ENCODE measurements at regions of chr2 and their contacts with region 1.

Region 1: DNA sequence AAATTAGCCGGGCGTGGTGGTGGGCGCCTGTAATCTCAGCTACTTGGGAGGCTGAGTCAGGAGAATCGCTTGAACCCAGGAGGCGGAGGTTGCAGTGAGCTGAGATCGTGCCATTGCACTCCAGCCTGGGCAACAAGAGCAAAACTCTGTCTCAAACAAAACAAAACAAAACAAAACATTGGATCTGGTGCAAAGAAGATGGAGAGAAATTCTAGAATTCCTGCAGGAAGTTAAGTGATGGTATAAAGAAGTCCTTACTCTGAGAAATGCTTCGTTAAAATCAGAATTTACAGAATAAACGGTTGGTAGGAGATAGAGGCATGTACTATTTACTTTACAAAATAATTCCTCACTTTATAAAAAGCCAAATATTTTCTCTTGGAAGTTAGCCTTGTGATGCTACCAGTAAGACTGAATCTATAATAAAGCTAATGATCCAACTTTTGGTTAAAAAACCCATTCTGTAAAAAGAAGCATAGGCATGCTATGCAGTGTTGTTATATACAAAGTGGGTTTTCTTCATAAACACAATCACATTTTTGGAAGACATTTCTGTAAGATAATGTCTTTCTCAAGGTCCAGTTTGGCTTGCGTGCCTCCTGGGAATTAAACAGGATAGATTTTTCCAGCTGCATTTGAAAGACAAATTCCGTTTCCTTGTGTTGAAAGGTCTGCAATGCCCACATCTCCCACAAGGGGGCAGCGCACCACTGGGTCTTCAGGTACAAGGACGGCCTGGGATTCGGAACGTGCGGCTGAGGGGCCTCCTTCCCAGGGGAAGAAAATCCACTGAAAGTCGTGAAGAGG is 35.6 kb upstream of the PNO1 start:
- DNase-seq: peak; percentile 81
- ATAC-seq: peak; percentile 34
- H3K4me3 ChIP-seq: peak overlapping the region in 1 of 5 experiments; percentile 34
- H3K4me3 Mint-ChIP-seq: peak overlapping the region; percentile 50
- H3K27ac ChIP-seq: peak overlapping the region in 1 of 2 donors; percentile 88
- H3K27ac Mint-ChIP-seq: peak overlapping the region; percentile 99
- H3K4me1 ChIP-seq: peaks cover 27 to 46% of the 10 kb centered on the region in 2 donors
- H3K4me1 Mint-ChIP-seq: peaks cover 42% of the 10 kb centered on the region
- H3K27me3 ChIP-seq: no peaks in the 10 kb centered on the region
- H3K27me3 Mint-ChIP-seq: no peaks in the 10 kb centered on the region
- CTCF ChIP-seq: peak; percentile 95

Region 2: GRCh38 chr2:68062680-68063387 is 59.2 kb before region 1 on chr2 and contains the start of gene C1D:
- CTCF ChIA-PET with region 1: interaction called, 16 read pairs
- POLR2A ChIA-PET with region 1: interaction called, 4 read pairs
- intact Hi-C with region 1: loop called (anchors 1 kb)
- DNase-seq: peak; percentile 95
- ATAC-seq: peak; percentile 96
- H3K4me3 ChIP-seq: peak within 1 kb of the TSS; percentile 87 to 97 (median 96)
- H3K4me3 Mint-ChIP-seq: peak within 1 kb of the TSS; percentile 95
- H3K27ac ChIP-seq: peak within 1 kb of the TSS; percentile 88 to 96
- H3K27ac Mint-ChIP-seq: peak within 1 kb of the TSS; percentile 96
- H3K4me1 ChIP-seq: peaks cover 20 to 30% of the 10 kb centered on the region in 2 donors
- H3K4me1 Mint-ChIP-seq: peaks cover 40% of the 10 kb centered on the region
- H3K27me3 ChIP-seq: no peaks in the 10 kb centered on the region
- H3K27me3 Mint-ChIP-seq: peaks cover 6% of the 10 kb centered on the region
- CTCF ChIP-seq: no peak
- total RNA-seq, gene C1D: 20.1 and 24.8 TPM in 2 replicates

Region 3: DNA sequence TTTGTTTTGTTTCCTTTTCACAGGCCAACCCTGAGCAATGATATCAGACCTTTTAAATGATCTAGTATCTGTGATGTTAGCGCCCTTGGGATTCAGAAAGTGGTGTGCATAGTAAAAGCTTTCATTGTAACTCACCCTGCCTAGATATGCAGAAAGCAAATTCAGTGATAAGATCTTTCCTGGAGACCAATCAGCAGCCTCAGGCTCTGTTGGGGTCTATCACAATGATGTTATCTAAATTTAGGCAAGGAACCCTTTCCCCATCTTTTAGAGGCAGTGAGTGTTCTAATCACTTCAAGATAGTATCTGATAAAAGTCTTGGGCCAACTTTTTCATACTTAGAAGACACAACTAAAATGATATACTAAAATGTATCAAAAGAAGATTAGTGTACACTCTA is 12.0 kb after region 1 on chr2:
- CTCF ChIA-PET with region 1: interaction called, 25 read pairs
- POLR2A ChIA-PET with region 1: no interaction called
- intact Hi-C with region 1: no loop called
- DNase-seq: no peak
- ATAC-seq: no peak
- H3K4me3 ChIP-seq: no peak overlapping the region
- H3K4me3 Mint-ChIP-seq: no peak overlapping the region
- H3K27ac ChIP-seq: no peak overlapping the region
- H3K27ac Mint-ChIP-seq: no peak overlapping the region
- H3K4me1 ChIP-seq: no peaks in the 10 kb centered on the region
- H3K4me1 Mint-ChIP-seq: no peaks in the 10 kb centered on the region
- H3K27me3 ChIP-seq: no peaks in the 10 kb centered on the region
- H3K27me3 Mint-ChIP-seq: no peaks in the 10 kb centered on the region
- CTCF ChIP-seq: no peak

Region 4: DNA sequence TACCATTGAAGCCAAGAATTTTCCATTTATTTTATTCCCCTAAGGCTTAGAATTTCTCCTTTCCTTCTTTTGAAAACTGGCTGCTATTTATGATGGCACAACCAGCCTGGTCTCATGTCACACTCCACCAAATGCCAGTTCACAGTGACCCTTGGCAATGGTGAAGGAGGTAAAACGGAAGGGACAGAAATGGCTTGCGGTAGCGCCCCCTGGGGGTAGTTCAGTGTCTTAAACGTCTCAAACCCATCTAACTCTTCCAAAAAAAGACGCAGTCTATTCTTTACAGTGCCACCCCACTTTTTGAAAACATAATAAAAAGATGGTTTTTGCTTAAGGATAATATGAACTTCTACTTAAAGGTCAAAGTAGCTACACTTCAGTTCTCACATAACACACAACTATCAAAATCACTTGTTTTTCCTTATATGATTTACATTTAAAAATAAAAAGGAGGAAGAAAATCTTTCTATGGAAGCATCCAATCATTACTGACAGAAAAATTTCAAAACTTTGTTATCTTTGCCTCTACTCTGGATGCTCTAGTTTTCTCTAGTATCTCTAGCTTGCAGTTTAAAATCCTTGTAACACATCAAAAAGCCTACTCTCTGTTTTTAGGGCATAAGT is 63.6 kb after region 1 on chr2:
- CTCF ChIA-PET with region 1: interaction called, 36 read pairs
- POLR2A ChIA-PET with region 1: no interaction called
- intact Hi-C with region 1: loop called (anchors 1 kb)
- DNase-seq: peak; percentile 76
- ATAC-seq: peak; percentile 61
- H3K4me3 ChIP-seq: no peak overlapping the region
- H3K4me3 Mint-ChIP-seq: no peak overlapping the region
- H3K27ac ChIP-seq: no peak overlapping the region
- H3K27ac Mint-ChIP-seq: no peak overlapping the region
- H3K4me1 ChIP-seq: peaks cover 0 to 5% of the 10 kb centered on the region in 2 donors
- H3K4me1 Mint-ChIP-seq: peaks cover 24% of the 10 kb centered on the region
- H3K27me3 ChIP-seq: no peaks in the 10 kb centered on the region
- H3K27me3 Mint-ChIP-seq: no peaks in the 10 kb centered on the region
- CTCF ChIP-seq: peak; percentile 93

Region 5: GRCh38 chr2:68225119-68225632 is 103.1 kb after region 1 on chr2:
- CTCF ChIA-PET with region 1: interaction called, 20 read pairs
- POLR2A ChIA-PET with region 1: no interaction called
- intact Hi-C with region 1: no loop called
- DNase-seq: peak; percentile 45
- ATAC-seq: no peak
- H3K4me3 ChIP-seq: no peak overlapping the region
- H3K4me3 Mint-ChIP-seq: peak overlapping the region; percentile 5
- H3K27ac ChIP-seq: peak overlapping the region in 1 of 2 donors; percentile 58
- H3K27ac Mint-ChIP-seq: no peak overlapping the region
- H3K4me1 ChIP-seq: peaks cover 13 to 48% of the 10 kb centered on the region in 2 donors
- H3K4me1 Mint-ChIP-seq: peaks cover 86% of the 10 kb centered on the region
- H3K27me3 ChIP-seq: no peaks in the 10 kb centered on the region
- H3K27me3 Mint-ChIP-seq: no peaks in the 10 kb centered on the region
- CTCF ChIP-seq: no peak

Region 6: DNA sequence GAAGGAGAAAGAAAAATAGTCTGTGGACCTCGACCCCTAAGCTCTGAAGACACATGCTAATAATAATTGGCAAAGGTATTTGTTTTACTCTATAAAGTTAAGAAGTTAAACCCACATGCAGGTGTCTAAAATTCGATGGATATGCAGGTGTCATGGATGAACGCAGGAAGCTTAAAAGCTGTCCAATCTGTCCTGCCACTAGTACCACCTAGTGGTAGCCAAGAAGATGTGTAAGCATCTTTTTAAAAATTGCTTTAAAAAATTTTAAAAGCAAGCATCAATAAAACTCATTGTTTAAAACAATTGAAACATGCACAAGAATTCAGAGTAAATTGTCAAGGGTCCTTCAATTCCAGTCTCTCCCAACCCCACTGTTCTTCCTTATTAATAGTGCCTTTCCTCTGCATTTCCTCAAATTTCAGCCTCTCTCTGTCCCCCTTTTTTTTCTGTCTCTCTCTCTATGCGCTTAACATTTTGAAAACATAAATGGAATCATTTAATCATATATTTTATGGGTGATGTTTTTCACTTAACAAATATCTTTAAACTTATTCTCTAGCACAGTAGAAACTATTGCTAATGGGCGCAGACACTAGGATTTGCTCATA is 160.8 kb after region 1 on chr2:
- CTCF ChIA-PET with region 1: interaction called, 80 read pairs
- POLR2A ChIA-PET with region 1: no interaction called
- intact Hi-C with region 1: loop called (anchors 1 kb)
- DNase-seq: peak; percentile 57
- ATAC-seq: peak; percentile 53
- H3K4me3 ChIP-seq: no peak overlapping the region
- H3K4me3 Mint-ChIP-seq: no peak overlapping the region
- H3K27ac ChIP-seq: no peak overlapping the region
- H3K27ac Mint-ChIP-seq: no peak overlapping the region
- H3K4me1 ChIP-seq: peaks cover 0 to 3% of the 10 kb centered on the region in 2 donors
- H3K4me1 Mint-ChIP-seq: peaks cover 4% of the 10 kb centered on the region
- H3K27me3 ChIP-seq: no peaks in the 10 kb centered on the region
- H3K27me3 Mint-ChIP-seq: no peaks in the 10 kb centered on the region
- CTCF ChIP-seq: peak; percentile 88

Region 7: GRCh38 chr2:68441179-68441993 is 319.3 kb after region 1 on chr2:
- CTCF ChIA-PET with region 1: interaction called, 34 read pairs
- POLR2A ChIA-PET with region 1: no interaction called
- intact Hi-C with region 1: loop called (anchors 1 kb)
- DNase-seq: peak; percentile 97
- ATAC-seq: peak; percentile 98
- H3K4me3 ChIP-seq: peak overlapping the region in 1 of 5 experiments; percentile 45
- H3K4me3 Mint-ChIP-seq: peak overlapping the region; percentile 77
- H3K27ac ChIP-seq: peak overlapping the region; percentile 75 to 90
- H3K27ac Mint-ChIP-seq: peak overlapping the region; percentile 95
- H3K4me1 ChIP-seq: peaks cover 33 to 39% of the 10 kb centered on the region in 2 donors
- H3K4me1 Mint-ChIP-seq: peaks cover 46% of the 10 kb centered on the region
- H3K27me3 ChIP-seq: no peaks in the 10 kb centered on the region
- H3K27me3 Mint-ChIP-seq: no peaks in the 10 kb centered on the region
- CTCF ChIP-seq: peak; percentile 97